ENCODE measurements at regions of chr15 and their contacts with region 1.

Region 1: GRCh38 chr15:68304589-68305337 is 27.2 kb downstream of the FEM1B start:
- DNase-seq: no peak
- H3K4me3 Mint-ChIP-seq: no peak overlapping the region
- H3K27ac Mint-ChIP-seq: peak overlapping the region; percentile 11
- H3K4me1 Mint-ChIP-seq: peaks cover 26% of the 10 kb centered on the region
- H3K27me3 Mint-ChIP-seq: peaks cover 7% of the 10 kb centered on the region

Region 2: DNA sequence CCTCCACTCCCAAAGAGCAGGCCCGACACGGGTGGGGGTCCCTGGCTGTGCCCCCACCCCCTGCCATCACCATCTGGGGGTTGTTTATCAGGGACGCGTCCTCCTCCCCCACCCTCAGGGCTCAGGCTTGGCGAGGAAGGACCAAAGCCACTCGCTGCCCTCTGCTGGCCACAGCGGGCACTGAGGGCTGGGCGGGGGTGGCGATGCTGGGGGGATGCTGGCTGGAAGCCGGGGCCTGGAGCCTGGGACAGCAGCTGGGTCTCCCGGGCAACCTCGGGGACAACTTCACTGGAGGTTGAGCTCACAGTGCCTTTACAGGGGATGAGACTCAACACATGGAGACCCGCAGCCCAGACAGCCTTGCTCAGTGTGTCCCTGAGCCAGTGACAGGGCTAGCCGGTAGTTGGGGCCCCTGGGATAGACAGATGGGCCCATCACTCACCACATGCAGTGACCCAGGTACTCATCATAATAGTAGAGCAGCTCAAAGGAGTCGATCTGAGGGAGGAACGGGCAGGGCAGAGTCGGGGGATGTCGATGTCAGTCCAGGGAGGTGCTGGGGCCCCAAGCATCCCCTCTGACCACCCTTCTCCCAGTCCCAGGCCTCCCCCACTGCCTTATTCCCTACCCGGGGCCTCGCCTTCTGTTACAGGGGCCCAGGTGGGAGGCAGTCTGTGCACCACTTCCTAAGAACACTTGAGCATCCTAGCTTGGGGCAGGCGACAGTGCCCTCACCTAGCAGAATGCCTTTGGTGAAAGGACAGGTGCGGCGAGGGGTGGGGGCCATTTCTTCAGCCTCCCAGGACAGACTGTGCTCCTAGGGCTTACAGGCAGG is 93.7 kb before region 1 on chr15:
- intact Hi-C with region 1: no loop called
- DNase-seq: peak; percentile 36
- H3K4me3 Mint-ChIP-seq: no peak overlapping the region
- H3K27ac Mint-ChIP-seq: no peak overlapping the region
- H3K4me1 Mint-ChIP-seq: peaks cover 35% of the 10 kb centered on the region
- H3K27me3 Mint-ChIP-seq: no peaks in the 10 kb centered on the region

Region 3: DNA sequence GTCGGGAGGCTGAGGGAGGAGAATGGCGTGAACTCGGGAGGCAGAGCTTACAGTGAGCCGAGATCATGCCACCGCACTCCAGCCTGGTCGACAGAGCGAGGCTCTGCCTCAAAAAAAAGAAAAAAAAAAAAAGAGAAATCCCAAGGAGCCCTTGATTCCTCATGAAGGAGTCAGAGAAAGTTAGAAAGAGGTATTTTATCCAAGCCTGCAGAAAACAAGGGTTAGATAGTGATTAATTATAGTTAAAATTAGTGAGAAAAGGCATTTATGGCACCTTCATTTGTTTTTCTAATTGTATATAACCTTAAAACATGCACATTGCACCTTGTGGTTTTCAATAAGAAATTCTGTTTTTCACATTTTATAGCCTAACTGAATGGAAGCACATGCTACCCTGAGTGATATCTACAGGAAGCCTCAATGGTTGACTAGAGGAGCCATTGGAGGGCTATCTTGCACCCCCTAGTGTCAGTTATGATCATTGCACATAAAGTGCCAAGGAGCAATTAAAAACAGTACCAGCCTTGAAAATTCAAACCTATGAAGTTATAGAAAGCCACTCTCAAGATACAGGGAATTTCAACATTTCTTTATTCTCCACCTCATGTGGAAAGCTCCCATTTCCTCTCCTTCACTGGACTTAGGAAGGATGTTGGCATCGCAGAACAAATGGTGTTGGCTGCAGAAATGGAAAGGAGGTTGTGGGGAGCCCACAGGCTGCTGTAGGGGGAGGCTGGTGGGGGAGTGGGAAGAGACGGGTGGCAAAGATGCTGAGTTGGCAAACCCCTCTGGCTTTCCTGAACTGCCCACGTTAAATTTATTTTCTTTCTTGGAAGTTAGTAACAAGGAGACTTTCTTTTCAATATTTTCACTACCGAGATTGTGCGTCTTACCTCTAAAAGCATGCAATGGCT is 78.7 kb after region 1 on chr15:
- intact Hi-C with region 1: loop called (anchors 1 kb)
- DNase-seq: peak; percentile 25
- H3K4me3 Mint-ChIP-seq: no peak overlapping the region
- H3K27ac Mint-ChIP-seq: no peak overlapping the region
- H3K4me1 Mint-ChIP-seq: peaks cover 18% of the 10 kb centered on the region
- H3K27me3 Mint-ChIP-seq: peaks cover 3% of the 10 kb centered on the region

Region 4: GRCh38 chr15:68536331-68537095 is 231.8 kb after region 1 on chr15:
- intact Hi-C with region 1: loop called (anchors 5 kb)
- DNase-seq: no peak
- H3K4me3 Mint-ChIP-seq: no peak overlapping the region
- H3K27ac Mint-ChIP-seq: no peak overlapping the region
- H3K4me1 Mint-ChIP-seq: no peaks in the 10 kb centered on the region
- H3K27me3 Mint-ChIP-seq: peaks cover 21% of the 10 kb centered on the region

Region 5: DNA sequence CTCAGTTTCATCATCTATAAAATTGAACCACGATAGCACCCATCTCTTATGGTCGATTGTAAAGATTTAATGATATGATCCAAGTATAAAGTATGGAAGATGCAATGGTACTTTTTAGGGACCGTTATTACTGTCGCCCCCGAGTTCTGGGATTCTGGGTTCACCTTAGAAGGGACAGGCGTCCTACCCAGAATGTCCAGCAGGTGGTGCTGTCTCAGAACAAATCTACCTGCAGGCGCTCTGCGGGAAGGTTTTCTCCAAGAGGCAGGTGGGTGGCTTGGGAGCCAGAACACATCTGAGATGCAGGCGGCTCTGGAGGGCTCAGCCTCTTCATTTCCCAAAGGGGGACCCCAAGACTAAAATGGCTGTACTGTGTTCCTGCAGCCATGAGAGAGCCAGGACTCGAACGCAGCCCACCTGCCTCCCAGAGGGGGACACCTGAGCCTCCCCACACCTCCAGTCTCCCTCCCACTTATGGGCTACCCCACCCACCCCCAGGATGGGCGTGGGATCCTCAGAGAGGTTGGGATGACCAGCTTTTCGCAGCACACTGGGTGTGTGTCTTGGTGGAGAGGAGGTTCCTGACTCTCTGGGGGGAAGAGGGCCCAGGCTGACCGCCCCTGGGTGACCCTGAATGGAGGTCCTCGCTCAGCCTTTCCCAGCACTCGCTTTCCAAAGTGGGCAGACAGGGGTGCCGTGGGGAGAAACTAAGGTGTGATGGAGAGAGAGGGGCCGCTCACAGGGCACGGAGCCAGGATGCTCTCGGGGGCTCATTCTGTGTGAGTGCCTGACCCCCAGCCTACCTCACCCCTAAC is 245.9 kb after region 1 on chr15:
- intact Hi-C with region 1: loop called (anchors 1 kb)
- DNase-seq: peak; percentile 50
- H3K4me3 Mint-ChIP-seq: no peak overlapping the region
- H3K27ac Mint-ChIP-seq: no peak overlapping the region
- H3K4me1 Mint-ChIP-seq: peaks cover 11% of the 10 kb centered on the region
- H3K27me3 Mint-ChIP-seq: peaks cover 29% of the 10 kb centered on the region

Region 6: GRCh38 chr15:68674975-68675374 is 370.2 kb after region 1 on chr15:
- intact Hi-C with region 1: loop called (anchors 2 kb)
- DNase-seq: no peak
- H3K4me3 Mint-ChIP-seq: no peak overlapping the region
- H3K27ac Mint-ChIP-seq: no peak overlapping the region
- H3K4me1 Mint-ChIP-seq: no peaks in the 10 kb centered on the region
- H3K27me3 Mint-ChIP-seq: peaks cover 9% of the 10 kb centered on the region

Region 7: GRCh38 chr15:68791431-68792283 is 486.9 kb after region 1 on chr15:
- intact Hi-C with region 1: no loop called
- DNase-seq: peak; percentile 69
- H3K4me3 Mint-ChIP-seq: peak overlapping the region; percentile 72
- H3K27ac Mint-ChIP-seq: peak overlapping the region; percentile 97
- H3K4me1 Mint-ChIP-seq: peaks cover 76% of the 10 kb centered on the region
- H3K27me3 Mint-ChIP-seq: no peaks in the 10 kb centered on the region

Measured in activated T-helper 1 cell treated with anti-CD3 and anti-CD28 coated beads, Interleukin-12 subunit alpha, Interleukin-12 subunit beta, Interleukin-2, Interleukin-4 antibody, amounts not matched to agents 30 ng/mL and 10 ng/mL and 1 ng/mL, durations not matched to agents 14 hours and 24 hours and 36 hours (primary cell).